B cell (primary cell): ENCODE measurements at regions of chr1 and their contacts with region 1.

Region 1: DNA sequence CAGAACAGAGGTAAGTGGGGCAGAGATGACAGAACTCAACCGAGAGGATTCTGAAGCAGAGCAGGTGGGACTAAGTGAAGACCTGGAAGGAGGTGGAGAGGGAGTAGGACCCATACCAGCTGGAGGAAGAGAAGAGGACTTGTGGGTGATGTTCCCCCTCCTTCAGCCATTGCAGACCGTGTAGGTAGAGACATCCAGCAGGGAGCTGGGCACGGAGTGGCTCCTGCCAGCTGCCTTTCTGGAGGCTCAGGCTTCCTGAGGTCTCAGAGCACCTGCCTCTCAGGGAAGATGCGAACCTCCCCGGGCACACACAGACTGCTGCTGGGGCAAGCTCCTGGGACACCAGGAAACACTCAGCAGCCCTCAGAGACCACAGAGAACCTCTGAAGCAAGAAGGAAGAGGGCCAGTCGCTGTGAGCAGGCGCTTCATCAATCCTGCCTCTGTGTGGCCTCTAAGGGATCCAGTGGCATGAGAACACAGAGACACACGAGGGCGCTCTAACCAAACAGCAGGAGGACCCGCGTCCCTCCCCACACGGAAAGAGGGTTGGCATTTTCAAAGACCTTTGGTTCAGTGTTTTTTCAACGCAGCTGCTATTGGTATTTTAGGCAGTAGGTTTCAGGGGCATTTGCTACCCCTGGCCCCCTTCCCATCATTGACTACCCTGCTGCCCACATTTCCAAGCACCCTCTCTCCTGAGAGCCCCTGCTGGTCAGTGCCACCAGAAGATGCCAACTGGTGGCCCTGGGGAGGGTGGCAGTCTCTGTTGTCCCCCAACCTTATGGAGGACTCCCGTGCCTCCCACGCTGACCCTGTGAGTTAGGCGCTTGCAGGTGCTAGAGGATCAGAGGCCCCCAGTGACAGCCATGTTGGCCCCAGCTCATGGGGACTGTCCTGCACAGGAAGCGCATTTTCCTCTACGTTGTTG is 89.6 kb upstream of the EDN2 start:
- DNase-seq: peak; percentile 88
- ATAC-seq: peak; percentile 92
- H3K4me3 ChIP-seq: no peak overlapping the region
- H3K4me3 Mint-ChIP-seq: no peak overlapping the region
- H3K27ac ChIP-seq: no peak overlapping the region
- H3K27ac Mint-ChIP-seq: no peak overlapping the region
- H3K4me1 ChIP-seq: peaks cover 14 to 18% of the 10 kb centered on the region in 2 donors
- H3K4me1 Mint-ChIP-seq: peaks cover 22% of the 10 kb centered on the region
- H3K27me3 ChIP-seq: no peaks in the 10 kb centered on the region
- H3K27me3 Mint-ChIP-seq: no peaks in the 10 kb centered on the region
- CTCF ChIP-seq: peak; percentile 92

Region 2: DNA sequence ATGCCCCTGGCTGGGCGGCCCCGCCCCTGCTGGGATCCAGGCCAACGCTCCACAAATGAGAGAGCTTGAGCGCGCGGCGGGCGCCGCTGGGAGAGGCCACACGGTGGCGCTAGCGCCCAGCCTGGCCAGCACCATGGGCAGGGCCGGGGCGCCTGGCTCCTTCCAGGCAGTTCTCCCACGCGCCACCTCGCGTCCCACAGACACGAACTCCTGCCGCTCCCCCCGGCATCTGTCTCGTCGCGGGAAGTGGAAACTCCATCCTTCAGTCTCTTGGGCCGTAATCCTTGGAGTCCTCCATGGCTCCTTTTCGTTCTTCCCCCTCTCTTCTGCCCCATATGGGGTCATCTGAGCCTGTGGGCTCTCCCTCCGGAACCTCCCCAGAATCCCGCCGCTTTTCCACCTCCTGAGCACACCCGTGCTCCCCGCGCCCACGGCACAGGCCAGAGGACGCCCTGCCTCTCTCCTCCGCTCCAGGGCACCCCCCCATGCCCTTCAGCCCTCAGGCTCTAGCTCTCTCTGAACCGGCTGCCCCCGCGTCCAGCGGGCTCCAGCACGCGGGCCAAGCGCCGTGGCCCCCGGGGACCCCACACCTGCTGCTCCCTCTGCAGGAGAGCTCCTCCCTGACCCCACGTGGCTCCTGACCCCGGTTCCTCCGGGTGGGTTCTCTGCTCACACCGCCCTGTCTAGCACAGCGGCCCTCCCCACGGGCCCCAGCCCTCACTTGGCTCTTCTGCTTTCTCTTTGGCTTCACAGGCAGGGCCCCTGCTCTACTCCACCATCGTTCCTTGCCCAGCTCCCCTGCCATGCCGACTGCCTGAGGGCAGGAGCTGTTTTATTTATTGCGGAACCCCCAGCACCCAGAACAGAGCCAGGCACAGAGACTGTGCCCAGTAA is 57.6 kb before region 1 on chr1:
- CTCF ChIA-PET with region 1: interaction called, 9 read pairs
- POLR2A ChIA-PET with region 1: no interaction called
- intact Hi-C with region 1: loop called (anchors 10 kb)
- DNase-seq: peak; percentile 77
- ATAC-seq: peak; percentile 87
- H3K4me3 ChIP-seq: peak overlapping the region in 4 of 5 experiments; percentile 48 to 59 (median 53)
- H3K4me3 Mint-ChIP-seq: peak overlapping the region; percentile 87
- H3K27ac ChIP-seq: no peak overlapping the region
- H3K27ac Mint-ChIP-seq: peak overlapping the region; percentile 37
- H3K4me1 ChIP-seq: peaks cover 25 to 39% of the 10 kb centered on the region in 2 donors
- H3K4me1 Mint-ChIP-seq: peaks cover 35% of the 10 kb centered on the region
- H3K27me3 ChIP-seq: no peaks in the 10 kb centered on the region
- H3K27me3 Mint-ChIP-seq: no peaks in the 10 kb centered on the region
- CTCF ChIP-seq: peak; percentile 95

Region 3: GRCh38 chr1:41662061-41662764 is 88.2 kb after region 1 on chr1:
- CTCF ChIA-PET with region 1: interaction called, 5 read pairs
- POLR2A ChIA-PET with region 1: no interaction called
- intact Hi-C with region 1: loop called (anchors 5 kb)
- DNase-seq: peak; percentile 86
- ATAC-seq: peak; percentile 78
- H3K4me3 ChIP-seq: peak overlapping the region in 4 of 5 experiments; percentile 43 to 88 (median 67)
- H3K4me3 Mint-ChIP-seq: peak overlapping the region; percentile 70
- H3K27ac ChIP-seq: peak overlapping the region; percentile 69 to 87
- H3K27ac Mint-ChIP-seq: peak overlapping the region; percentile 80
- H3K4me1 ChIP-seq: peaks cover 44 to 79% of the 10 kb centered on the region in 2 donors
- H3K4me1 Mint-ChIP-seq: peaks cover 79% of the 10 kb centered on the region
- H3K27me3 ChIP-seq: no peaks in the 10 kb centered on the region
- H3K27me3 Mint-ChIP-seq: no peaks in the 10 kb centered on the region
- CTCF ChIP-seq: no peak

Region 4: GRCh38 chr1:41728403-41729202 is 154.6 kb after region 1 on chr1:
- CTCF ChIA-PET with region 1: interaction called, 24 read pairs
- POLR2A ChIA-PET with region 1: no interaction called
- intact Hi-C with region 1: loop called (anchors 10 kb)
- DNase-seq: peak; percentile 92
- ATAC-seq: peak; percentile 79
- H3K4me3 ChIP-seq: peak overlapping the region in 1 of 5 experiments; percentile 58
- H3K4me3 Mint-ChIP-seq: peak overlapping the region; percentile 81
- H3K27ac ChIP-seq: peak overlapping the region; percentile 86 to 94
- H3K27ac Mint-ChIP-seq: peak overlapping the region; percentile 84
- H3K4me1 ChIP-seq: peaks cover 43 to 71% of the 10 kb centered on the region in 2 donors
- H3K4me1 Mint-ChIP-seq: peaks cover 67% of the 10 kb centered on the region
- H3K27me3 ChIP-seq: no peaks in the 10 kb centered on the region
- H3K27me3 Mint-ChIP-seq: no peaks in the 10 kb centered on the region
- CTCF ChIP-seq: no peak

Region 5: GRCh38 chr1:41812051-41812450 is 238.0 kb after region 1 on chr1:
- CTCF ChIA-PET with region 1: interaction called, 20 read pairs
- POLR2A ChIA-PET with region 1: no interaction called
- intact Hi-C with region 1: no loop called
- DNase-seq: peak; percentile 56
- ATAC-seq: no peak
- H3K4me3 ChIP-seq: no peak overlapping the region
- H3K4me3 Mint-ChIP-seq: no peak overlapping the region
- H3K27ac ChIP-seq: no peak overlapping the region
- H3K27ac Mint-ChIP-seq: no peak overlapping the region
- H3K4me1 ChIP-seq: peaks cover 16 to 29% of the 10 kb centered on the region in 2 donors
- H3K4me1 Mint-ChIP-seq: peaks cover 31% of the 10 kb centered on the region
- H3K27me3 ChIP-seq: no peaks in the 10 kb centered on the region
- H3K27me3 Mint-ChIP-seq: no peaks in the 10 kb centered on the region
- CTCF ChIP-seq: peak; percentile 48

Region 6: GRCh38 chr1:41891199-41891896 is 317.3 kb after region 1 on chr1:
- CTCF ChIA-PET with region 1: interaction called, 40 read pairs
- POLR2A ChIA-PET with region 1: no interaction called
- intact Hi-C with region 1: loop called (anchors 2 kb)
- DNase-seq: peak; percentile 86
- ATAC-seq: peak; percentile 96
- H3K4me3 ChIP-seq: peak overlapping the region; percentile 8 to 70 (median 52)
- H3K4me3 Mint-ChIP-seq: peak overlapping the region; percentile 84
- H3K27ac ChIP-seq: peak overlapping the region; percentile 72 to 80
- H3K27ac Mint-ChIP-seq: peak overlapping the region; percentile 83
- H3K4me1 ChIP-seq: peaks cover 13 to 23% of the 10 kb centered on the region in 2 donors
- H3K4me1 Mint-ChIP-seq: peaks cover 16% of the 10 kb centered on the region
- H3K27me3 ChIP-seq: no peaks in the 10 kb centered on the region
- H3K27me3 Mint-ChIP-seq: no peaks in the 10 kb centered on the region
- CTCF ChIP-seq: peak; percentile 51

Region 7: GRCh38 chr1:42173155-42173933 is 599.3 kb after region 1 on chr1:
- CTCF ChIA-PET with region 1: interaction called, 114 read pairs
- POLR2A ChIA-PET with region 1: no interaction called
- intact Hi-C with region 1: loop called (anchors 1 kb)
- DNase-seq: peak; percentile 73
- ATAC-seq: peak; percentile 80
- H3K4me3 ChIP-seq: no peak overlapping the region
- H3K4me3 Mint-ChIP-seq: no peak overlapping the region
- H3K27ac ChIP-seq: no peak overlapping the region
- H3K27ac Mint-ChIP-seq: no peak overlapping the region
- H3K4me1 ChIP-seq: peaks cover 0 to 3% of the 10 kb centered on the region in 2 donors
- H3K4me1 Mint-ChIP-seq: no peaks in the 10 kb centered on the region
- H3K27me3 ChIP-seq: no peaks in the 10 kb centered on the region
- H3K27me3 Mint-ChIP-seq: no peaks in the 10 kb centered on the region
- CTCF ChIP-seq: peak; percentile 92